Motor neuron (in vitro differentiated cells): ENCODE measurements at regions of chr17 and their contacts with region 1.

Region 1: DNA sequence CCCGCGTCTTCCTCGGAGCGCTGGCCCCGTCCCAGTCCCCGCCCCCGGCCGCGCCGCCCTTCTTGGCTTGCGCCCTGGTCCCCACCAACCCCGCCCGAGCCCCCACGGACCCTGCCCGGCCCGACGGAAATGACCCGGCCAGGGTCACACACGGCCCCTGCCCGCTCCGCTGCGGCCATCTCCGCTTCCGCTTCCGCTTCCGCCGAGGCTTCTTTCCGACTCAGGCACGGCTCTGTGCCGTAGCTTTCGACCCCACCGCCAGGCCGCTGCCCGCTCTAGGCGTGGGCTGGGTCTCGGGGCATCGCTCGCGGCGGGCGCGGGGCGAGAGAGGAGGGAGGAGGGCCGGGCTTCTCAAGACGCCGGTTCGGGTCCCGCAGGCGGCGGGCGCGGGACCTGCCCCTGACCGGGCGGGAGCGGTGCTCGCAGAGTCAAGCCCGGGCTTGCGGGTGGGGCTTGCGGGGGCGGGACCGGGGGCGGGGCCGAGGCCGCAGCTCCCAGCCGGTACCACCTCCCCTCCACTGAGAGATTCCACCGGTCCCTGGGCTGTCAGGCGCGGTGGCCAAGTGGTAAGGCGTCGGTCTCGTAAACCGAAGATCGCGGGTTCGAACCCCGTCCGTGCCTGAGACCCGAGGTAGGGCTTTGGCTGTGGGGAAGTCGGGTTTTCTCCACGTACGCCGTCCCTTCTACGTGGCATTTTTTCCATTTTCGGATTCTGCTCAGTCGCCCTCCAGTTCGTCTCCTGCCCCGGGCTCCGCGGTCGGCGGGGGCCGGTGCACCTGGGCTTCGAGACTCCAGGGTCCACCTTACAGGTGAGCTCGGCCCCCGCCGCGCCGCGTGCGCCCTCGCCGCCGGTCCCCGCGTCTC is 158.3 kb downstream of the RAB11FIP4 start:
- ATAC-seq: peak; percentile 83 to 92 (median 88)
- H3K4me3 ChIP-seq: peak overlapping the region; percentile 61 to 87 (median 77)
- H3K27ac ChIP-seq: peak overlapping the region; percentile 47 to 81
- H3K4me1 ChIP-seq: peaks cover 4 to 5% of the 10 kb centered on the region in 2 donors

Region 2: GRCh38 chr17:31425282-31426040 is 124.3 kb before region 1 on chr17:
- in situ Hi-C with region 1: loop called in 1 of 9 experiments (anchors 25 kb)
- ATAC-seq: peak in 6 of 8 experiments; percentile 49 to 90 (median 83)
- H3K4me3 ChIP-seq: no peak overlapping the region
- H3K27ac ChIP-seq: peak overlapping the region; percentile 82 to 83
- H3K4me1 ChIP-seq: peaks cover 11 to 15% of the 10 kb centered on the region in 2 donors

Region 3: DNA sequence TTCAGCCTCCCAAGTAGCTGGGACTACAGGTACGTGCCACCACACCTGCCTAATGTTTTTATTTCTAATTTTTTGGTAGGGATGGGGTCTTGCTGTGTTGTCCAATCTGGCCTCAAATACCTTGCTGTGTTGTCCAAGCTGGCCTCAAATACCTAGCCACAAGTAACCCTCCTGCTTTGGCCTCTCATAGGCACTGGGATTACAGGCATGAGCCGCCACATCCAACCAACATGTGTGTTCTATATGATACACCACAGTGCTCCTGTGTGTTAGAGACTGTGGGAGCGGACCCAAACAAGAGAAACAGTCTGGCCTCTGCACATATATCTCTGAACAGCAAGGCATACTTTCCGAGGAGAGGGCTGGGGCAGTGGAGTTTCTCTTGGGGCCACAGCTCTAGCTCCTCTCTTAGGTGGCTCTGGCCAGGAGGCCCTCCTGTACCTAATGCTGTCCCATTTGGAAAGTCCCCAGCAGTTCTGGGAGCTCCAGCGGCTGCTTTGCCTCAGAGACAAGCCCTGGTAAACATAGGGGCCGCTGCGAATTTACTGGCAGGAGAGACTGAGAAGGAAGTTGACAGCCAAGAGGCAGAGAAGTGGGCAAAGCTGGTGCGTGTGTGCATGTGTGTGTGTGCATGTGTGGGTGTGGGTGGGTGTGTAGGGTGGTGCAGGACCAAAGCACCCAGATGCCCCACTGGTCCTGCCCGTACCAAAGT is 63.2 kb before region 1 on chr17:
- in situ Hi-C with region 1: no loop called
- ATAC-seq: no peak
- H3K4me3 ChIP-seq: no peak overlapping the region
- H3K27ac ChIP-seq: no peak overlapping the region
- H3K4me1 ChIP-seq: peaks cover 7 to 10% of the 10 kb centered on the region in 2 donors

Region 4: DNA sequence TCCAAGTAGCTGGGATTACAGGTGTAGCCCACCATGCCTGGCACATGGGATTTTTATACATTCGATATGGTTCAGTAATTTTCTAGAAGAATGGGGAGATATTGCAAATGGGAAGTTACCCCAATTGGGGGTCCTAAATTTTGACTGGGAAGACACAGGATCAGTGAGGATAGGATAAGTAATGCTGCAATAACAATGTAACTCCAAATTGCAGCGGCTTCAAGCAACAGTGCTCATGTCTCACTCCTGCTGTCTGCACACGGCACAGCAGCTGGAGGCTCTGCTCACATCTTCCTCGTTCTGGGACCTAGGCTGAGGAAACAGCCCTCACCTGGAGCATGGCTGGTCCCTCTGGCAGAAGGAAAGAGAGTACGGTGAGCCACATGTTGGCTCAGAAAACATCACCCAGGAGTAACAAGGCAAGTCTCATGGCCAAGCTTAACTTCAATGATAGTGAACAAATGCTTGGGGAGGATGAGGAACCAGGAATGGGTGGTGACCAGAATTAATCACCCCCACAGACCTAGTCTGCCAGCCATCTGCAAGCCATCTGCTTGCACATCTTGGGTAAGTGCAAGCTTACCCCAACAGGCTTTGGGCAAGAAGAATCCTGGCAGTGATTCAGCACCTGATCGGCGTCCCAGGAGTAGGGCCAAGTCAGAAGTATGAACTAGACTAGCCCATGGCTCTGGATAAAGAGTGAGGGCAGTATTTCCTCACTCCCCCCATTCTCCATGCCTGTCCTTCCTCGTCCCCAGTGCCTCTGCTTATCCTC is 80.1 kb after region 1 on chr17:
- in situ Hi-C with region 1: no loop called
- ATAC-seq: peak in 3 of 8 experiments; percentile 60 to 84 (median 76)
- H3K4me3 ChIP-seq: no peak overlapping the region
- H3K27ac ChIP-seq: no peak overlapping the region
- H3K4me1 ChIP-seq: no peaks in the 10 kb centered on the region

Region 5: DNA sequence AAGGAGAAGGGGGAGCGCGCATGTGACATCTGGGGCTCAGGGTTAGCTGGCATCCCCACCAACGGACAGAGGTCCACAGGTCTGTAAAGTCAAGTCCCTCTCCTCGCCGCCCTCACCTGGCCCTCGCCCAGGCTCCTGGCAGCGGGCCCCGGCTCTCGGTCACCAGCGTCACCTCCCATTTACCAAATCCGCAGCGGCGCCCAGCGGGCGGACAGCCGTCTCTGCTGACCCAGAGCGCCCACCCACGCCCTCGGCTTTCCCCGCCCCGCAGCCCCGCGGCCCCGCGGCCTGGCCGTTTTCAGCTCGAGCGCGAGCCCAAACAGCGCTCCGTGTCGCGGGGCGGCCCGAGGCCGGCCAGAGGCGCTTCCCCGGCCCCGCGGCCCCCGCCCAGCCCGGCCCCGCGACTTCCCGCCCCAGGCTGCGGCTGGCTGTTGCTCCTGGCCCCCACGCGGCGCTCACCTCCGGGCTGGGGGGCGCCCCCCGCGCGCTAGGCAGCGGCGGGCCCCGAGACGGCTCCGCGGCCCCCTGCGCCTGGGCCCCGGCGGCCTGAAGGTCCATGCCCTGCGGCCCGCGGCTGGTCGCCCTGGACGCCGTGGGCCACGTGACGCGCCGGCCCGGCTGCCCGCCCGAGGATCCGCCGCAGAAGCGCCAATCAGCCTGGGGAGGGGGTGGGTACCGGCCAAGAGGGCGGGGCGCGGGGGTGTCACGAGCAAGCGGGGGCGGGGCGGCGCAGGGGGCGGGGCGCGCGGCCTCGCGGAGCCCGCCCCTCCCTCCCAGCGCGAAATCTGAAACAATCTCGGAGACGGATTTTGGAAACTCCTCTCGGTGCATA is 309.1 kb after region 1 on chr17 and contains the start of gene COPRS:
- in situ Hi-C with region 1: loop called in 1 of 9 experiments (anchors 10 kb)
- ATAC-seq: peak; percentile 86 to 96 (median 94)
- H3K4me3 ChIP-seq: peak within 1 kb of the TSS; percentile 66 to 99 (median 80)
- H3K27ac ChIP-seq: peak within 1 kb of the TSS; percentile 54 to 56
- H3K4me1 ChIP-seq: peaks cover 6 to 7% of the 10 kb centered on the region in 2 donors
- total RNA-seq, gene COPRS: 23.5 to 61.8 (median 28.4) TPM